ENCODE measurements at regions of chr11 and their contacts with region 1.

Region 1: DNA sequence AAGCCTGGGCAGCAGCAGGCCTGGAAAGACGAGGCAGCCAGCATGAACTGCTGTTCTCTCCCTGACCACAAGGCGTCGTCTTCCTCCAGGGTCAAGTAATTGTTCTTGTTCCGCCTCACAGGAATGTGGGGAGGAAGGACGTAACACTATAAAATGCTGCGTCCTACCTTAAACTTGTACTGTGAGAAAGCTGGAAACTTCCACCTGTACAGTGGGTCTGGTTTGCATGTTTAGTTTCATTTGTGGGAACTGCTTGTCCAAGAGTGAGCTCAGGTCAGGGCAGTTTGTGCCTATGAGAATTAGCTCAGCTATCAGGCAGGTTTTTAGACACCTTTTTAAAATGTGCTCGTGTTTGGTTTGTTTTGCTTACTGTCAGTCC is 55.2 kb downstream of the PANX1 start:
- DNase-seq: peak; percentile 81 to 87
- H3K4me3 ChIP-seq: no peak overlapping the region
- H3K4me3 Mint-ChIP-seq: no peak overlapping the region
- H3K27ac Mint-ChIP-seq: no peak overlapping the region
- H3K4me1 ChIP-seq: no peaks in the 10 kb centered on the region
- H3K4me1 Mint-ChIP-seq: peaks cover 11% of the 10 kb centered on the region
- H3K27me3 ChIP-seq: no peaks in the 10 kb centered on the region
- H3K27me3 Mint-ChIP-seq: no peaks in the 10 kb centered on the region
- CTCF ChIP-seq: peak; percentile 96 to 97

Region 2: DNA sequence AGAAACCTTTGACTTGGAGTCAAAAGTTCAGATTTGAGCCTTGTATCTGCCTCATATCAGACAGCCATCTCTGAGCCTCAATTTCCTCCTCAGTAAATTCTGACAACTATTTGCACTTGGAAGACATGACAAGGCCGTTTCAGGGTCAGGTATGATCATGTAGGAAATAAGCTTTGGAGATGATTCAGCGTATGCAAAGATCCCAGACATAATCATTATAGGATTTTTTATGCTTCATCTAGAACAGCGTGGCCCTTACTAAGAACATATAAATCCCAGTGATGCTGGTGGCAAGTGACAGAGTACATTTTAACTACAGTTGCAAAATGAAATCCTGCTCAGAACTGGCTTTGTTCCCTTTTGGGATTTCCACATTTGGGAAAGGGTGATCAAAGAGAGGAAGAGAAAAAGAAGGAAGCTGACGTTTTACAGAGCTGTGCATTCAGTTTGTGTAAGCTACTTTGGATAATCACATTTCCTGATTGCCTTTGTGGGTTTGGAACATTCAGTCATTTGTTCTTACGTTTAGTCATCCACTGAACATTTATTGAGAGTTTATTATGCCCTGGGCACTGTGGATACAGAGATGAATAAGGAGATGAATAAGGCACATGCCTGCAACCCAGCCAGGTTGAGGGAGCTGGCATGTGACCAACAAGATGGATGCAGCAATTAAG is 244.7 kb before region 1 on chr11:
- CTCF ChIA-PET with region 1: no interaction called
- POLR2A ChIA-PET with region 1: no interaction called
- intact Hi-C with region 1: no loop called
- DNase-seq: no peak
- H3K4me3 ChIP-seq: no peak overlapping the region
- H3K4me3 Mint-ChIP-seq: no peak overlapping the region
- H3K27ac Mint-ChIP-seq: no peak overlapping the region
- H3K4me1 ChIP-seq: no peaks in the 10 kb centered on the region
- H3K4me1 Mint-ChIP-seq: no peaks in the 10 kb centered on the region
- H3K27me3 ChIP-seq: peaks cover 1% of the 10 kb centered on the region; the same call in 1 of the 2 replicates
- H3K27me3 Mint-ChIP-seq: peaks cover 15% of the 10 kb centered on the region
- CTCF ChIP-seq: no peak

Region 3: DNA sequence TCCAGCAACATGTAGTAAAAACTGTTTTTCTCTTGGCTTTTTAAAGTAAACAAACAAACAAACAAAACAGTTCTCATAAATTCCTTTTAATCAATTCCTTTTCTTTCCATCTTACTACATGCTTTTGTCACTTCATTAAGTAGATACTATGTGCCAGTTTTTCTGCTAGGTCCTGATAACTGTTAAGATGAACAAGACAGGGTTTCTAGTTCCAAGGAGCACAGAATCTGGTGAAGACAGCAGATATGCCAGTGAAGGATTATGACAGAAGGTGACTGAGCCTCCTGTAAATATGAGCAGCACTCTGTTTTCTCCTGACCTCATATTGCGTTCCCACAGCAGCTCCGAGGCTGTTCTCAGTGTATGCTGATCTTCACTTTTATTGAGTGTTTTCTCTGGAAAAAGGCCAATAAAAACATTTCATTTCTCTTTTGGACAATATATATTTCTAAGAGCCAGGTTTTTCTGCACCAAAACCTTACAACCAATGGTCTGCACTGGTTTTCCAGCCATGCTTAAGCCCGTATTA is 116.9 kb before region 1 on chr11:
- CTCF ChIA-PET with region 1: no interaction called
- POLR2A ChIA-PET with region 1: no interaction called
- intact Hi-C with region 1: no loop called
- DNase-seq: no peak
- H3K4me3 ChIP-seq: no peak overlapping the region
- H3K4me3 Mint-ChIP-seq: no peak overlapping the region
- H3K27ac Mint-ChIP-seq: no peak overlapping the region
- H3K4me1 ChIP-seq: no peaks in the 10 kb centered on the region
- H3K4me1 Mint-ChIP-seq: no peaks in the 10 kb centered on the region
- H3K27me3 ChIP-seq: no peaks in the 10 kb centered on the region
- H3K27me3 Mint-ChIP-seq: no peaks in the 10 kb centered on the region
- CTCF ChIP-seq: no peak

Region 4: GRCh38 chr11:94310191-94310875 is 126.5 kb after region 1 on chr11:
- CTCF ChIA-PET with region 1: no interaction called
- POLR2A ChIA-PET with region 1: no interaction called
- intact Hi-C with region 1: loop called (anchors 5 kb)
- DNase-seq: no peak
- H3K4me3 ChIP-seq: no peak overlapping the region
- H3K4me3 Mint-ChIP-seq: no peak overlapping the region
- H3K27ac Mint-ChIP-seq: no peak overlapping the region
- H3K4me1 ChIP-seq: peaks cover 40% of the 10 kb centered on the region
- H3K4me1 Mint-ChIP-seq: peaks cover 36% of the 10 kb centered on the region
- H3K27me3 ChIP-seq: no peaks in the 10 kb centered on the region
- H3K27me3 Mint-ChIP-seq: no peaks in the 10 kb centered on the region
- CTCF ChIP-seq: no peak

Measured in Caco-2 (cell line).